HCT116 (cell line): ENCODE measurements at regions of chr14 and their contacts with region 1.

Region 1: GRCh38 chr14:101774006-101774795 is 12.7 kb downstream of the PPP2R5C start:
- DNase-seq: no peak
- ATAC-seq: no peak
- H3K4me3 ChIP-seq: no peak overlapping the region
- H3K27ac ChIP-seq: no peak overlapping the region
- H3K4me1 ChIP-seq: no peaks in the 10 kb centered on the region; a peak in 1 of 4 replicates
- H3K27me3 ChIP-seq: no peaks in the 10 kb centered on the region
- CTCF ChIP-seq: no peak
- POLR2A ChIP-seq: no peak
- RAD21 ChIP-seq: no peak

Region 2: GRCh38 chr14:101761032-101761880 is 12.9 kb before region 1 on chr14 and contains the start of gene PPP2R5C:
- CTCF ChIA-PET with region 1: interaction called, 25 read pairs
- POLR2A ChIA-PET with region 1: interaction called, 4 read pairs
- RAD21 ChIA-PET with region 1: interaction called in 1 of 2 experiments, 8 read pairs
- intact Hi-C with region 1: no loop called
- DNase-seq: peak; percentile 62
- ATAC-seq: peak; percentile 82
- H3K4me3 ChIP-seq: peak within 1 kb of the TSS; percentile 60 to 81
- H3K27ac ChIP-seq: peak within 1 kb of the TSS; percentile 65; the same call in 1 of the 2 replicates
- H3K4me1 ChIP-seq: peaks cover 9 to 16% of the 10 kb centered on the region in 2 experiments
- H3K27me3 ChIP-seq: no peaks in the 10 kb centered on the region
- CTCF ChIP-seq: no peak
- POLR2A ChIP-seq: no peak
- RAD21 ChIP-seq: no peak
- total RNA-seq, gene PPP2R5C: 117 TPM

Region 3: DNA sequence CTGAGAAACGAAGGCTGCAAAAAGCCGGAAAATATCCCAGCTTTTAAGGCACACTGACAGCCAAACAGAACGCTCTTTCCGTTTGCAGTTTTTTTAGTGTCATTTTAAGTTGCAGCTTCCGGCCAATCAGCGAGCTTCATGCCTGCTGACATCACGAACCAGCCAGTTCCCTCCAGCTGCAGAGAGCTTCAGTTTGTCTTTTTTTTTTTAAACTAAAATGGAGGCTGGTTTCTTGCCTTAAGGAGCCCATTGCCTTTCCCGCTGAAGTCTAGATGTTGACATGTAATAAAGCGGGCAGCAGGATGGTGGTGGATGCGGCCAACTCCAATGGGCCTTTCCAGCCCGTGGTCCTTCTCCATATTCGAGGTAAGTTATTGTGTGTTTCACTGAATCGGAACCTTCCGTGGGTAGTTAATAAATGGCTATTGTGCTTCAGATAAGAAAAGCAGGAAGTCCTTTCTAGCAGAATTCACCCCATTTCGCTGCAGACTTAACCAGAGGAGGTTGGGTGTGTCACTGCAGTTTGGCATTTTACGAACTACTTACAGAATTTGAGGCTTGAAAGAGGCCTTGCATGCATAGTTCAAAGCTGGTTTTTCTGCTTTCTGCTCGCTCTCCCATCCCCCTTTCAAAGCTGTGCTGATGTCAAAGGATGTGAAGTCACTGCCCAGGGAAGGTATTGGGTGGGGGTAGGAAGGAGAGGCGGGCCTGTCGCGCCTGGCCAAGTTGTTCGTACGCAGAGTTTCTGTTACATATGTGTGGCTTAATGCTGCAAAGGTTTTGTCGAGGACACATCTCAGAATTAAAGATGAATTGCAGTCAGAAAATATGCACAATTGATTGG is 35.7 kb after region 1 on chr14:
- CTCF ChIA-PET with region 1: interaction called, 10 read pairs
- POLR2A ChIA-PET with region 1: interaction called, 14 read pairs
- RAD21 ChIA-PET with region 1: no interaction called
- intact Hi-C with region 1: no loop called
- DNase-seq: peak; percentile 91
- ATAC-seq: peak; percentile 92
- H3K4me3 ChIP-seq: peak overlapping the region; percentile 75 to 76
- H3K27ac ChIP-seq: peak overlapping the region; percentile 82
- H3K4me1 ChIP-seq: peaks cover 7 to 28% of the 10 kb centered on the region in 2 experiments; a peak in 3 of 4 replicates
- H3K27me3 ChIP-seq: no peaks in the 10 kb centered on the region
- CTCF ChIP-seq: no peak
- POLR2A ChIP-seq: peak; percentile 52
- RAD21 ChIP-seq: no peak

Region 4: DNA sequence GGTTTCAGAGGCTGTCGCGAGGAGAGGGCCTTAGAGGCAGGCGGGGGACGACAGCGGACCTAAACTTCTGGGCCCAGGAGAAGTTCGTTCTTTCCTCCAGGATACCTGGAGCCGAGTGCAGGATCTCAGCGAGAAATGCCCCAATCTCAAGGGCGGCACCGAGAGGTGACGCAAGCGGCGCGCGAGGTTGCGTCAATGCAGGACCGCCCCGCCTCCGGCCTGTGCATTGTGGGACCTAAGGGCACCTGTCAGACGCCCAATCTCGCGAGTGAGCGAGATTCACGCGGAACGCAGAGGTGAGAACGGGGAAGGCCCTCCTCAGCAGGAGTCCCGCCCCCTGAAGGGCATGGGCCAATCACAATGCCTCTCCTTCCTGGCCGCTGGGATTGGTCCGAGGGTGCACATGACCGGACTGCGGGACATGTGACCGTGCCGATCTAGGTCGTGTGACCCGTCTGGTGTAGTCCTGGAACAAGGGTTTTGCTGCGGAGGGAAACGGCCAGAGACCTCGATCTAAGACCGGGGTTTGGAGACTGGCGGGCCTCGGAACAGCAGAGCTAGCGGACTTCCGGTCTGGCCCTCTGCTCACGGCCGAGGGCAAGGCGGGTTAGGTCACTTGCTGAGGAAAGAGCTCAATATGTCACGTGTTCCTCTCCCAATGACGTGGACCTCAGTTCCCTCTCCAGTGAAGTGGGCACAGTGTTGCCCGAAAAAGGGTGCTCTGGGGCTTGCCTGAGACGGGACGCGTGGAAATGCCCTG is 173.9 kb after region 1 on chr14:
- CTCF ChIA-PET with region 1: interaction called, 18 read pairs
- POLR2A ChIA-PET with region 1: interaction called, 3 read pairs
- RAD21 ChIA-PET with region 1: no interaction called
- intact Hi-C with region 1: loop called (anchors 2 kb)
- DNase-seq: peak; percentile 100
- ATAC-seq: peak; percentile 98
- H3K4me3 ChIP-seq: peak overlapping the region; percentile 82 to 92
- H3K27ac ChIP-seq: peak overlapping the region; percentile 76
- H3K4me1 ChIP-seq: peaks cover 5 to 7% of the 10 kb centered on the region in 2 experiments
- H3K27me3 ChIP-seq: no peaks in the 10 kb centered on the region
- CTCF ChIP-seq: no peak
- POLR2A ChIP-seq: peak; percentile 93
- RAD21 ChIP-seq: no peak

Region 5: DNA sequence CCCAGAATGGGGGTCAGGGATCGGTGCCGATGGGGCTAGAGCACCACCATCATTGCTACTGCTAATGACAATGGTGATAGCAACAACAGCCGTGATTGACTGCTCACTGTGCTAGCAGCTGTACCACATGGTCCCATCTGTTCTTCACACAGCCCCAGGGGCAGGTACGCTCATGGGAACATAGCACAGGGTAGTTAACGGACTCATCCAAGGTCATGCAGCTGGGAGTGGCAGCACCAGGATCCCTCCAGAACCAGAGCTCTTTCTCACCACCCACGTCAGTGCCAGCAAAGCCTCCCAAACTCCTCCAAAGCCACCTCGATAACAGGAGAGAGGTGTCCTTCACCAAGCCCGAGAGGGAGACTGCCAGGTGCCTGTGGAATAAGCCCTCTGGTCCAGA is 178.9 kb after region 1 on chr14:
- CTCF ChIA-PET with region 1: interaction called, 18 read pairs
- POLR2A ChIA-PET with region 1: interaction called, 3 read pairs
- RAD21 ChIA-PET with region 1: interaction called in 1 of 2 experiments, 10 read pairs
- intact Hi-C with region 1: loop called (anchors 2 kb)
- DNase-seq: no peak
- ATAC-seq: no peak
- H3K4me3 ChIP-seq: no peak overlapping the region
- H3K27ac ChIP-seq: no peak overlapping the region
- H3K4me1 ChIP-seq: peaks cover 5 to 7% of the 10 kb centered on the region in 2 experiments
- H3K27me3 ChIP-seq: no peaks in the 10 kb centered on the region
- CTCF ChIP-seq: no peak
- POLR2A ChIP-seq: no peak
- RAD21 ChIP-seq: no peak